ENCODE measurements at regions of chr2 and their contacts with region 1.

Region 1: DNA sequence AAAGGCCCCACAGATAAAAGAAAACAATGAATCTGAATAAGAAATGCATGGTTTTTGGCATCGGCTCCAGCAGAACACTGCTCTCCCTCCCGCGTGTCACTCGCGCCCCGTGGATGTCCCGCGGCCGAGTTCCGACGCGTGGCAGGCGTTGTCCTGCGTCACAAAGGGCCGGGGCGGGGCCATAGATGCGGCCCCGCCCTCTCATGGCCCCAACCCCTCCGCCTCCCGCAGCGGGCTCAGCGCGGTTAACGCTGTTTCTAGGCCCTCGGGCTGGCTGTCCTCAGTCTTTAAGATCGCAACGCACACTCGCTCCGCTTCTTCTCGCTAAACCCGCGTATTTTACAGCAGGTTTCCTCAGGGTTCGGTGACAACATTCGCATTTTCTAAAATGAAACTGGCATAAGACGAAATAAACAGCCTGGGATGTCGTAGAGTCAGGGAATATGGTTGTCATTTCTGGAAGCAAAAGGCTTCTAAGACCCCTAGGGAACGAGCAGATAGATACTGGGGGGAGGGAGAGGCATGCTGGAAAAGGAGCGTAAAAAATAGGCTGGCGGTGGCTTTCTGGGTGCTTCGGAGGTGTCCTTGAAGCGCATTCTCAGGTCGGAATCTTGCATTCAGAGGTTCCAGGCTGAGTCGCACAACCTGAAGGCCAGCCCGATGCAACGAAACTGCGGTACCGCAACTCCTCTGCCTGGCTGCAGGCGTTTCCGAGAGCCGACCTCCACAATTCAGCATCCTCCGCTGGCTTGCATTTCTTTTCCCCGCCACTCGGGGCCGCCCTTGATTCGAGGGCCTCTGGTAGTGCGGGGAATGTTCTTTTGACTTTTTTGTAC is at the start of gene FKBP7:
- DNase-seq: peak; percentile 97
- total RNA-seq, gene FKBP7: 15.0 to 30.4 TPM

Region 2: DNA sequence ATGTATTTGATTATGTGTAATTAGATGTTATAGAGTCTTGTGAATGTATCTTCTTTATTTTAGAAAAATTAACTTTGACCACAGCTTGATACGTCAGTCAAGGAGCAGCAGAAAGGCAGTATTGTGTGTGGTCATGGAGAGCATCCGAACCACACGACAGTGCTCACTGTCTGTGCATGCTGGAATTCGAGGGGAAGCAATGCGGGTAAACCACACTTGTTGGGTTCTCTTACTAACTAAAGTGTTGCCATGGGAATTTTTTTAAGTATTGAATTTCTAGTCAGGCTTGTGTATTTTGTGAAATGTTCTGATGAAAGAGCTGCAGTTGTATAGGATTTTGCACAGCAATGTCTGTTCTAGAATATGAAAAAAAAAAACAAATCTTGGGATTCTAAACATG is 22.7 kb before region 1 on chr2:
- intact Hi-C with region 1: loop called in 1 of 2 experiments (anchors 2 kb)
- DNase-seq: no peak

Region 3: GRCh38 chr2:178491612-178492011 is 13.0 kb after region 1 on chr2:
- intact Hi-C with region 1: no loop called
- DNase-seq: no peak

Measured in posterior vena cava (tissue), 2 donors.